ENCODE measurements at regions of chr10 and their contacts with region 1.

Region 1: GRCh38 chr10:62732841-62733653 is 71.5 kb upstream of the ADO start:
- DNase-seq: peak; percentile 67
- H3K4me3 Mint-ChIP-seq: peak overlapping the region; percentile 26
- H3K27ac Mint-ChIP-seq: no peak overlapping the region
- H3K4me1 Mint-ChIP-seq: peaks cover 20% of the 10 kb centered on the region
- H3K27me3 Mint-ChIP-seq: peaks cover 5% of the 10 kb centered on the region

Region 2: GRCh38 chr10:61937631-61938351 is 795.3 kb before region 1 on chr10:
- CTCF ChIA-PET with region 1: no interaction called
- intact Hi-C with region 1: loop called (anchors 1 kb)
- DNase-seq: no peak
- H3K4me3 Mint-ChIP-seq: peak overlapping the region; percentile 40
- H3K27ac Mint-ChIP-seq: peak overlapping the region; percentile 93
- H3K4me1 Mint-ChIP-seq: peaks cover 92% of the 10 kb centered on the region
- H3K27me3 Mint-ChIP-seq: no peaks in the 10 kb centered on the region

Region 3: DNA sequence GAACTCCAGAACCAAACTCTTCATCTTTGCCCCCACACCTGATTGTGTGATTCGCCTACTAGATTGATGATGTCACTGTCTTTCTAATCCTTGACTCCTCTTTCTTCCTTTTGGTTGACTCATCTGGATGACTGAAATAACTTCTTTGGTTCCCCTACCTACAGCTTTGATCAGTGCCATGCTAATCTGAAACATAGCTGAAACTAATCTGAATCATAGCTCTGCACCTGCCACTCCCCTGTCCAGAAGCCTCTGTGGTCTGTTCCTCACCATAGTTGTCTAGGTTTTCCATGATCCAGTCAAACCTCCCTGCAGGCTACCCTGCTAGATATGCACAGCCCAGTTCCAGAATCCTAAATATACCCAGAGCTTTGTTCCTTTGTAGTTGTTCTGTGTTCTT is 307.0 kb before region 1 on chr10:
- CTCF ChIA-PET with region 1: no interaction called
- intact Hi-C with region 1: loop called (anchors 2 kb)
- DNase-seq: peak; percentile 64
- H3K4me3 Mint-ChIP-seq: no peak overlapping the region
- H3K27ac Mint-ChIP-seq: peak overlapping the region; percentile 12
- H3K4me1 Mint-ChIP-seq: peaks cover 28% of the 10 kb centered on the region
- H3K27me3 Mint-ChIP-seq: no peaks in the 10 kb centered on the region

Region 4: GRCh38 chr10:62637249-62638061 is 95.6 kb before region 1 on chr10:
- CTCF ChIA-PET with region 1: interaction called, 18 read pairs
- intact Hi-C with region 1: loop called (anchors 1 kb)
- DNase-seq: peak; percentile 81
- H3K4me3 Mint-ChIP-seq: no peak overlapping the region
- H3K27ac Mint-ChIP-seq: no peak overlapping the region
- H3K4me1 Mint-ChIP-seq: peaks cover 14% of the 10 kb centered on the region
- H3K27me3 Mint-ChIP-seq: no peaks in the 10 kb centered on the region

Region 5: DNA sequence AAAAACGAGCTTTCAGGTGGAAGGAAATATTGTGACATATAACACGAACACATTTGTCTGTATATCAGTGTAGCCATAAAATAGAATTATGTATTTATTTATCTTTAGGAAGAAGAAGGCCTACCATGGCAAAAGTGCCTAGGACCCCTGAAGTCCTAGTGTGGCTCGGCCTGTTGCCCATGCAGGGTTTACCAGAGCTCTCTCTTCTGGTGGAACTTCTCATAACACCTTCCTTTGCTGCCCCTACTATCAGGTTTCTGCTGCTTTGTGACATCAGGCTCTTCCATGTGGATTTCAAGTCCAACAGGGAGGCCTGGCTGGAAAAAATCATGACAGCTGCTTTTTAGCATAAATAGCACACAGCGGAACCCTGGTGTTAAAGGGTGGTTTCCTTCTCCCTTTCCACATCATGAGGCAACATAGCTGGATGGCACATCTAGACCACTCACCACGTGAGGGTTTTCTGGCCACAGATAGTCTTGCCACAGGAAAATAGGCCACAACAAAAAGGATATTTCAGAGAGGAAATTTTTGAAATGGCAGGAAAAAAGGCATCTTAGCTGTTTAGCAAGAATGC is 26.6 kb after region 1 on chr10:
- CTCF ChIA-PET with region 1: no interaction called
- intact Hi-C with region 1: loop called (anchors 1 kb)
- DNase-seq: no peak
- H3K4me3 Mint-ChIP-seq: no peak overlapping the region
- H3K27ac Mint-ChIP-seq: no peak overlapping the region
- H3K4me1 Mint-ChIP-seq: peaks cover 30% of the 10 kb centered on the region
- H3K27me3 Mint-ChIP-seq: no peaks in the 10 kb centered on the region

Region 6: DNA sequence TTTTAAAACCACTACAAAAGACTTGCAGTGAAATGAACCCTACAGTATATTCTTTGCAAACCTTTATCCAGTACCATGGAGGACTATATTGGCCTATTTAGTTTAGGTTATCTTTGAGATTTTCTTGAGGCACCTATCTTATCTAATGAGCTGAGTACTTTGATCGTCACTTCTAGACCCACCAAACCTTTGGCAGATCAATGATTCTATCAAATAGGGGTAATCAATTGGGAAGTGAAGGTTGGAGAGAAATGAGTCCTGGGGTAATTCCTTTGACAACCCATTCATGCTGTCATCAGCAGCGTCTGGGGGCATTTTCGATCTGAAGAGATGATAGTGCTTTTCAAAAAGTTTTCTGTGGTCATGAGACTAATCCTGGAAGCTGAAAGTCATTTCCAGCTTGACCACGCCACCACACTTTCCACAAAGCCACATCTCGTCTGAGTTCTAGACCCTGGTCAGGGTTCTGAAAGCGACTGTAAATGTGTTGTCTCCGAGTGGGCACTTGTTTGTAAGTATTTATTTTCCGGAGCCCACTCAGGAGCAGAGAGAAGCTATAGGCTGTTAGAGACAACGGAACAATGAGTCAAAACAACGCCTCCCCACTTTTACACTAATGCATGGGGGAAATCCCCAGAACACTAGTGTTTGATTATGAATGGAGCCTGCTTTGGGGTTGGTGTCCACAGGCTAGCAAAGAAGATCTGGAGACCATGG is 78.3 kb after region 1 on chr10:
- CTCF ChIA-PET with region 1: interaction called, 9 read pairs
- intact Hi-C with region 1: loop called (anchors 1 kb)
- DNase-seq: peak; percentile 91
- H3K4me3 Mint-ChIP-seq: peak overlapping the region; percentile 30
- H3K27ac Mint-ChIP-seq: peak overlapping the region; percentile 79
- H3K4me1 Mint-ChIP-seq: peaks cover 78% of the 10 kb centered on the region
- H3K27me3 Mint-ChIP-seq: no peaks in the 10 kb centered on the region

Region 7: GRCh38 chr10:63133056-63133820 is 400.2 kb after region 1 on chr10 and contains the start of gene NRBF2:
- CTCF ChIA-PET with region 1: no interaction called
- intact Hi-C with region 1: loop called (anchors 1 kb)
- DNase-seq: peak; percentile 98
- H3K4me3 Mint-ChIP-seq: peak within 1 kb of the TSS; percentile 89
- H3K27ac Mint-ChIP-seq: peak within 1 kb of the TSS; percentile 92
- H3K4me1 Mint-ChIP-seq: peaks cover 38% of the 10 kb centered on the region
- H3K27me3 Mint-ChIP-seq: no peaks in the 10 kb centered on the region
- total RNA-seq, gene NRBF2: 15.4 to 15.6 TPM

Region 8: GRCh38 chr10:63197344-63198106 is 464.5 kb after region 1 on chr10:
- CTCF ChIA-PET with region 1: no interaction called
- intact Hi-C with region 1: no loop called
- DNase-seq: no peak
- H3K4me3 Mint-ChIP-seq: no peak overlapping the region
- H3K27ac Mint-ChIP-seq: no peak overlapping the region
- H3K4me1 Mint-ChIP-seq: peaks cover 3% of the 10 kb centered on the region
- H3K27me3 Mint-ChIP-seq: no peaks in the 10 kb centered on the region

Measured in activated naive CD4-positive, alpha-beta T cell treated with anti-CD3 and anti-CD28 coated beads for 36 hours (primary cell).